ENCODE measurements at regions of chr14 and their contacts with region 1.

Region 1: GRCh38 chr14:57811998-57812546 is 53.8 kb downstream of the SLC35F4 start:
- DNase-seq: no peak
- H3K4me3 Mint-ChIP-seq: no peak overlapping the region
- H3K27ac Mint-ChIP-seq: no peak overlapping the region
- H3K4me1 Mint-ChIP-seq: peaks cover 8% of the 10 kb centered on the region
- H3K27me3 Mint-ChIP-seq: no peaks in the 10 kb centered on the region
- CTCF ChIP-seq: no peak

Region 2: GRCh38 chr14:57822081-57822480 is 10.0 kb after region 1 on chr14:
- CTCF ChIA-PET with region 1: interaction called, 3 read pairs
- POLR2A ChIA-PET with region 1: interaction called, 10 read pairs
- intact Hi-C with region 1: no loop called
- DNase-seq: peak; percentile 62
- H3K4me3 Mint-ChIP-seq: no peak overlapping the region
- H3K27ac Mint-ChIP-seq: no peak overlapping the region
- H3K4me1 Mint-ChIP-seq: peaks cover 17% of the 10 kb centered on the region
- H3K27me3 Mint-ChIP-seq: no peaks in the 10 kb centered on the region
- CTCF ChIP-seq: no peak